ENCODE measurements at regions of chr3 and their contacts with region 1.

Region 1: DNA sequence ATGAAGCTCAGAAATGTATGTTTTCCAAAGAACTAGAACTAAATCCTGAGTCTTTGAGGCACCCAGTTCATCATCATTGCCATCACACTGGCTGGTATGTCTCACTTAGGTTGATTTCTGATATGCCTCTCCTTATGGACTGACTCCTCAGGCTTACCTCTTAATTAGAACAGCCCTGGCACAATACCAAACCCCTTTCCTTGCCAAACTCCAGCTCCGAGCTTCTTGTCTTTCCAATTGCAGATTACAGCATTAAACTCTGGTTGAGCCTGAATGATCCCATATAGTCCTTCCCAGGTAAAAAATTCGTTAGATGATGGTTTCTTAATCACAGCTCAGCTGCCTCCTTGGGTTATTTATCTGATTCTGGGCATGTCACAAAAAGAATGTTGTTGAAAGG is 66.3 kb downstream of the RTP4 start:
- DNase-seq: no peak
- H3K4me3 ChIP-seq: no peak overlapping the region
- H3K27ac ChIP-seq: no peak overlapping the region
- H3K4me1 ChIP-seq: no peaks in the 10 kb centered on the region; a peak in 1 of 7 replicates
- H3K27me3 ChIP-seq: no peaks in the 10 kb centered on the region; a peak in 1 of 7 replicates
- CTCF ChIP-seq: no peak
- EP300 ChIP-seq: no peak
- POLR2A ChIP-seq: no peak
- RAD21 ChIP-seq: no peak

Region 2: DNA sequence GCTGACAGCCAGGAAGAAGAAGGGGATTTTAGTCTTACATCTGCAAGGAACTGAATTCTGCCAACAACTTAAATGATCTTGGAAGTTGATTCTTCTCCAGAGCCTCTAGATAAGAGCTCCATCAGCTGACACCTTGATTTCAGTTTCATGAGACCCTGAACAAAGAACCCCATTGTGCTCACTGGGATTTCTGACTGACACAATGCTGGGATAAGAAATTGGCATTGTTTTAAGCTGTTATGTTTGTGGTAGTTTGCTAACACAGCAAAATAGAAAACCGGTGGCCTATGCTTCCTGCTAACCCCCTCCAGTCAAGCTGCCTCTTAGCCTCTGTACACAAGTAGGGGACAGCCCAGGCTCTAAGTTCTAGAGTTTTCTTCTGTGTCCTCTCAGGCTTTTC is 179.2 kb before region 1 on chr3:
- CTCF ChIA-PET with region 1: no interaction called
- POLR2A ChIA-PET with region 1: no interaction called
- DNase-seq: no peak
- H3K4me3 ChIP-seq: no peak overlapping the region
- H3K27ac ChIP-seq: no peak overlapping the region
- H3K4me1 ChIP-seq: peaks cover 0 to 3% (median 0%) of the 10 kb centered on the region in 4 experiments; a peak in 1 of 7 replicates
- H3K27me3 ChIP-seq: no peaks in the 10 kb centered on the region
- CTCF ChIP-seq: no peak
- EP300 ChIP-seq: no peak
- POLR2A ChIP-seq: no peak
- RAD21 ChIP-seq: no peak

Region 3: GRCh38 chr3:187448674-187449073 is 14.2 kb after region 1 on chr3:
- CTCF ChIA-PET with region 1: interaction called, 10 read pairs
- POLR2A ChIA-PET with region 1: interaction called, 3 read pairs
- DNase-seq: no peak
- H3K4me3 ChIP-seq: no peak overlapping the region
- H3K27ac ChIP-seq: no peak overlapping the region
- H3K4me1 ChIP-seq: peaks cover 0 to 13% (median 5%) of the 10 kb centered on the region in 4 experiments; a peak in 2 of 7 replicates
- H3K27me3 ChIP-seq: no peaks in the 10 kb centered on the region
- CTCF ChIP-seq: peak in 1 of 3 experiments; percentile 15; a peak in 1 of 4 replicates
- EP300 ChIP-seq: no peak
- POLR2A ChIP-seq: no peak
- RAD21 ChIP-seq: no peak

Measured in H1 (cell line).